Mammary epithelial cell (primary cell): ENCODE measurements at regions of chr10 and their contacts with region 1.

Region 1: DNA sequence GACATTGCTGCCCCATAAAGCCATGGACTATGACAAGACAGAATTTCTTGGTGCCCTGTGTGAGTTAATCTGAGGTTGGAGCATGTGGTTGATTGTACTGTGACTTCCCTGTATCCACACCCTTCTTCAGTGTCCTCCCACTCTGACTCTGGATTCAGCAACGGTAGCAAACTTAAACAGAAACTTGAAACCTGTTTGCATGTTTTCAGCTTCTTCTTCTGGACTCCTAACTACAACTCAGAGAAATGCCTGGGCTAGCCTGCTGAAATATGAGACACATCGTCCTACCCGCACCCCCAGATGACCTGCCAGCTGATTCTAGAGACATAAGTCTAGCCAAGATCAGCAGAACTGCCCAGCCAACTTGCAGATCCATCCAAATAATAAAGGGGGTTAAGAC is 78.4 kb downstream of the IPMK start:
- DNase-seq: peak; percentile 60
- H3K4me3 ChIP-seq: no peak overlapping the region
- H3K27ac ChIP-seq: no peak overlapping the region
- H3K4me1 ChIP-seq: peaks cover 2% of the 10 kb centered on the region
- H3K27me3 ChIP-seq: no peaks in the 10 kb centered on the region
- CTCF ChIP-seq: no peak

Region 2: DNA sequence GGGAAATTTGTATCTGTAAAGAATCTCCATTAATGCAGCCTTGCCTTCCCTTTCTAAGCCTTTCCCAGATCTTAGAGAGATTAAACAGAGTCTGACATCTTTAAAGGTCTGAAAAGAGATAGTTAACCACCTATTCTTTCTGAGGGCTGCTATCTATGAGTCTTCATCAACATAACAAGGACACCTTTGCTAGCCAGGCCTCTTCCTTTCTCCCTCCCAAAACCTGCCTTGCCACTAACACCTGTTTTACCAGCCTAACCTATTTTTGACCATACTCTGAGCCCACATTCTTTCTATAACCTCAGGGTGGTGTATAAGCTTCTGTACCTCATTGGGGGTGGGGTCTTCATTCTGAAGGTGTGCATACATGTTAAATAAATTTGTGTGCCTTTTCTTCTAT is 138.7 kb before region 1 on chr10:
- CTCF ChIA-PET with region 1: no interaction called
- dilution Hi-C with region 1: no loop called
- in situ Hi-C with region 1: no loop called
- intact Hi-C with region 1: no loop called
- DNase-seq: no peak
- H3K4me3 ChIP-seq: no peak overlapping the region
- H3K27ac ChIP-seq: no peak overlapping the region
- H3K4me1 ChIP-seq: no peaks in the 10 kb centered on the region
- H3K27me3 ChIP-seq: no peaks in the 10 kb centered on the region
- CTCF ChIP-seq: no peak

Region 3: GRCh38 chr10:58237014-58237830 is 48.0 kb after region 1 on chr10:
- CTCF ChIA-PET with region 1: no interaction called
- dilution Hi-C with region 1: no loop called
- in situ Hi-C with region 1: no loop called
- intact Hi-C with region 1: no loop called
- DNase-seq: peak; percentile 68
- H3K4me3 ChIP-seq: no peak overlapping the region
- H3K27ac ChIP-seq: peak overlapping the region; percentile 19
- H3K4me1 ChIP-seq: peaks cover 34% of the 10 kb centered on the region
- H3K27me3 ChIP-seq: no peaks in the 10 kb centered on the region
- CTCF ChIP-seq: no peak

Region 4: GRCh38 chr10:58282615-58283014 is 93.3 kb after region 1 on chr10:
- CTCF ChIA-PET with region 1: no interaction called
- dilution Hi-C with region 1: no loop called
- in situ Hi-C with region 1: loop called (anchors 5 to 10 kb)
- intact Hi-C with region 1: no loop called
- DNase-seq: no peak
- H3K4me3 ChIP-seq: no peak overlapping the region
- H3K27ac ChIP-seq: no peak overlapping the region
- H3K4me1 ChIP-seq: peaks cover 13% of the 10 kb centered on the region
- H3K27me3 ChIP-seq: no peaks in the 10 kb centered on the region
- CTCF ChIP-seq: no peak

Region 5: DNA sequence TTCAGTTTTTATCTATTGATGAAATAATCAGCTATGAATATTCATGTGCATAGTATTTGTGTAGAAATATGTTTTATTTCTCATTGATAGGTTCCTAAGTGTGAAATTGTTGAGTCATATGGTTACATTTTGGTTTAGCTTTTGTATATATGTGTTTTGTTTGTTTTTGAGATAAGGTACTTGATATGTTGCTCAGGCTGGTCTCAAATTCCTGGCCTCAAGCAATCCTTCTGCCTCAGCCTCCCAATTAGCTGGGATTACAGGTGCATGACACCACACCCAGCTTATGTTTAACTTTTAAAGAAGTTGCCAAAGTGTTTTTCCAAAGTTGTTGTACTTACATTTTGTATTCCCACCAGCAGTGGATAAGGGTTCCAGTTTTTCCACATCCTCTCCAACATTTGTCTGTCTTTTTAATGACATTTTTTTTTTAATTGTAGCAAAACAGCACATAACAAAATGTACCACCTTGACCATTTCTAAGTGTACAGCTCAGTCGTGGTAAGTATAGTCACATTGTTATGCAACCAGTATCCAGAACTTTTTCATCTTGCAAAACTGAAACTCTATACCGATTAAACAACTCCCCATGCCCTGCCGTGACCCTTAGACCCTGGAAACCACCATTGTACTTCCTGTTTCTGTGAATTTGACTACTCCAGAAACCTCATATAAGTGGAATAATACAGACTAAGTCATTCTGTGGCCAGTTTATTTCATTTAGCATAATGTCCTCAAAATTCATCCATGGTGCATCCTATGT is 133.0 kb after region 1 on chr10:
- CTCF ChIA-PET with region 1: no interaction called
- dilution Hi-C with region 1: no loop called
- in situ Hi-C with region 1: no loop called
- intact Hi-C with region 1: no loop called
- DNase-seq: peak; percentile 29
- H3K4me3 ChIP-seq: no peak overlapping the region
- H3K27ac ChIP-seq: no peak overlapping the region
- H3K4me1 ChIP-seq: no peaks in the 10 kb centered on the region
- H3K27me3 ChIP-seq: no peaks in the 10 kb centered on the region
- CTCF ChIP-seq: no peak